Endothelial cell of umbilical vein (primary cell): ENCODE measurements at regions of chr17 and their contacts with region 1.

Region 1: DNA sequence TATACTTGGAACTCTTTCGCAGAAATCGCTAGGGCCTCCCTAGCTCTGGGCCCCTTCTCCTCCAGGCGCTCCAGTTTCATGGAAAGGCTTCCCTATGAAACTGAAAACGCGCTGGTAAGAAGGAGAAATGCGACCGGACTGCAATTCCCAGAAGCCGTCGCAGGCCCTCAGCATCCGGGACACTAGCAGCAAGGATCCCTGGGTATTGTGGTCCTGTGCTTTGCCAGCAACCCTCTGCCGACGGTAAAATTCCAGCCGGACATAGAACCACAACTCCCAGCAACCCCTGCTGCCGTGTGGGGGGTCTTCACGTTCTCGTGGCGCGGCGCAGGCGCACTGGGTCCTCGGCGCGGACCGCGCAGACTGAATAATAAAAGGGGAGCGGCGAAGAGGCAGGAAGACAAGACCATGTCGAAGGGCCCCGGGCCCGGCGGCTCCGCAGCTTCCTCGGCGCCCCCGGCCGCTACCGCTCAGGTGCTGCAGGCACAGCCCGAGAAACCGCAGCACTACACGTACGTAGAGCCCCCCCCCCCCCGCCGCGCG is at the start of gene UNK:
- DNase-seq: peak; percentile 99
- H3K4me3 ChIP-seq: peak within 1 kb of the TSS in 2 of 3 experiments; percentile 32 to 55
- H3K27ac ChIP-seq: peak within 1 kb of the TSS; percentile 88
- H3K4me1 ChIP-seq: peaks cover 29% of the 10 kb centered on the region
- H3K27me3 ChIP-seq: no peaks in the 10 kb centered on the region
- CTCF ChIP-seq: no peak
- POLR2A ChIP-seq: peak; percentile 9
- total RNA-seq, gene UNK: 23.2 and 25.9 TPM in 2 replicates

Region 2: DNA sequence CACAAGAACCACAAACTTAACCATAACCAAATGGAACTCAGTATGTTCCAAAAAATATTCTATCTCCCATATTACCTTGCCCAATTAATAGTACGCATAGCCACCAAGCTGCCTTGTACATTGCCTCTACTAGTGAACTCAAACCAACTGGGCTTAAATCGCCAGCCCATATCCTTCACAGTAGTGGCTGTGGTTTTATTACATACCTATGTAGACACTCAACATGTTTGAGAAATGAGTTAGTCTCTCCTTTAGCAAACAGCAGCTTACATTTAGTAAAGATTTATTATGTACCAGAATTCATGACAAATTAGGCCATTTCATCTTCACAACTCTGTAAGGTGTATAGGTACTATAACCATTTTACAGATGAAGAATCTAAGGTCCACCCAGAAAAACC is 420.5 kb before region 1 on chr17:
- CTCF ChIA-PET with region 1: no interaction called
- POLR2A ChIA-PET with region 1: no interaction called
- dilution Hi-C with region 1: no loop called
- intact Hi-C with region 1: no loop called
- DNase-seq: no peak
- H3K4me3 ChIP-seq: no peak overlapping the region
- H3K27ac ChIP-seq: no peak overlapping the region
- H3K4me1 ChIP-seq: peaks cover 16% of the 10 kb centered on the region
- H3K27me3 ChIP-seq: no peaks in the 10 kb centered on the region
- CTCF ChIP-seq: no peak
- POLR2A ChIP-seq: no peak

Region 3: GRCh38 chr17:75652915-75653549 is 131.5 kb before region 1 on chr17:
- CTCF ChIA-PET with region 1: no interaction called
- POLR2A ChIA-PET with region 1: no interaction called
- dilution Hi-C with region 1: no loop called
- intact Hi-C with region 1: no loop called
- DNase-seq: peak; percentile 56
- H3K4me3 ChIP-seq: no peak overlapping the region
- H3K27ac ChIP-seq: no peak overlapping the region
- H3K4me1 ChIP-seq: peaks cover 8% of the 10 kb centered on the region
- H3K27me3 ChIP-seq: no peaks in the 10 kb centered on the region
- CTCF ChIP-seq: peak; percentile 77 to 86
- POLR2A ChIP-seq: no peak

Region 4: GRCh38 chr17:75795820-75796607 is 11.5 kb after region 1 on chr17:
- CTCF ChIA-PET with region 1: interaction called, 14 read pairs
- POLR2A ChIA-PET with region 1: interaction called, 4 read pairs
- dilution Hi-C with region 1: no loop called
- intact Hi-C with region 1: no loop called
- DNase-seq: no peak
- H3K4me3 ChIP-seq: no peak overlapping the region
- H3K27ac ChIP-seq: no peak overlapping the region
- H3K4me1 ChIP-seq: peaks cover 16% of the 10 kb centered on the region
- H3K27me3 ChIP-seq: no peaks in the 10 kb centered on the region
- CTCF ChIP-seq: no peak
- POLR2A ChIP-seq: no peak

Region 5: DNA sequence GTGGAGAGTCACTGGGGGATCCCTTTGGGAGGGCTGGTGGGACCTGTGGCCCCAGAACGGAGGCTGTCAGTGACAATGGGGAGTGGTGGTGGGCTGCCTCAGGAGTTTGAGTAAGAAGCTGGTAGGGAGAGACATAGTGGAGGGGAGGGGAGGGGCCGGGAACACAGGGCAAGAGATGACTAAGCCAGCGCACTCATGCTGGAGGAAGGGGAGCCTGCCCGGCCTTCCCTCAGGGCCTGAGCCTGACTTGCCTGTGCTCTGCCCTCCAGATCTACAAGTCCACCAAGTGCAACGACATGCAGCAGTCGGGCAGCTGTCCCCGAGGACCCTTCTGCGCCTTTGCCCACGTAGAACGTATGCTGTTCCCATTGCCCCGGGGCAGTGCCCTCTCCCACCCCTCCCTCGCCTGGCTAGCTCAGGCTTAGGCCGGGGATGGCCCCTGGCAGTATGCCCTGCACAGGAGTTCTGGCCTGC is 30.4 kb after region 1 on chr17:
- CTCF ChIA-PET with region 1: interaction called, 13 read pairs
- POLR2A ChIA-PET with region 1: interaction called, 13 read pairs
- dilution Hi-C with region 1: no loop called
- intact Hi-C with region 1: no loop called
- DNase-seq: peak; percentile 59
- H3K4me3 ChIP-seq: no peak overlapping the region
- H3K27ac ChIP-seq: peak overlapping the region; percentile 22
- H3K4me1 ChIP-seq: peaks cover 6% of the 10 kb centered on the region
- H3K27me3 ChIP-seq: no peaks in the 10 kb centered on the region
- CTCF ChIP-seq: no peak
- POLR2A ChIP-seq: no peak

Region 6: DNA sequence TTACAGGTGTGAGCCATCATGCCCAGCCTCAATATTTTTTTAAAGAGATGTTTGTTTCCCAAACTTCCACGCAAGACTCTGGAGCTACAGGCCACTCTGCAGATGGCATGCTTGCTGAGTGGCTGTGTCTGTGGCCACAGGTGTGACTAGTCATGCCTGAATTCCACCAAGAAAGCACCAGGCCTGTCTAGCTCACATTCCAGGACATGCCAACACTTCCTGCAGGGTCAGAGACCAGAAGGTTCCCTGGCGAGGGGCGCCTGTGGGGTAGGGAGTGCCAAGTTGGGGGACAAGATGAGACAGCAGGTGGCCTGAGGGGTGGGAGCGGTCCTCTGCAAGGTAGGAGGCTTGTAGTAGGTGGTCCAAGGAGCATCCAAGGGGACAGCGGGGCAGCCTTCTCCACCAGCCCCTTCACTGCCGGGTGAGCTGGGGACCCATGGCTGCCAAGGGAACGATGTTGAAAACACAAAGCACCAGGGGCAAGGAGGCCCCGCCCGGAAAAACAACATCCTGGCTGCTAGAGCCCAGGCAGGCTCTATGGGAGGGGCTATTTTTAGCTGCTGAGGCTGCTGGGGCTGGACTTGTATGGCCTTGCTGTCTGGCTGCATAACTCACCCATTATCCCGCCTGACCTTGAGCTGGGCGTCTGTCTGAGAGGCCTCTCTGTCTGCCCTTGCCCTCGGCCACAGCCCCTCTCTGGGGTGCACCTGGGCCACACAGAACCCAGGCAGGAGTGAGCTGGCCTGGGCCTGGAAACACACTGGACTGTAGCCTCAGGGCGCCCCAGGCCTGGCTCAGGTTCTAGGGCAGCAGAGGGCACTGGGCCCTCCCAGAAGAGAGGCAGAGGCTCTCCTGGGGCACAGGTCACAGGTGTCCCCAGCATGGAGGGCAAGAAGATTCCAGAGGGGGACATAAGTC is 88.1 kb after region 1 on chr17:
- CTCF ChIA-PET with region 1: interaction called, 4 read pairs
- POLR2A ChIA-PET with region 1: interaction called, 7 read pairs
- dilution Hi-C with region 1: no loop called
- intact Hi-C with region 1: loop called (anchors 1 kb)
- DNase-seq: peak; percentile 95
- H3K4me3 ChIP-seq: no peak overlapping the region
- H3K27ac ChIP-seq: peak overlapping the region; percentile 95
- H3K4me1 ChIP-seq: peaks cover 43% of the 10 kb centered on the region
- H3K27me3 ChIP-seq: no peaks in the 10 kb centered on the region
- CTCF ChIP-seq: no peak
- POLR2A ChIP-seq: peak; percentile 63

Region 7: DNA sequence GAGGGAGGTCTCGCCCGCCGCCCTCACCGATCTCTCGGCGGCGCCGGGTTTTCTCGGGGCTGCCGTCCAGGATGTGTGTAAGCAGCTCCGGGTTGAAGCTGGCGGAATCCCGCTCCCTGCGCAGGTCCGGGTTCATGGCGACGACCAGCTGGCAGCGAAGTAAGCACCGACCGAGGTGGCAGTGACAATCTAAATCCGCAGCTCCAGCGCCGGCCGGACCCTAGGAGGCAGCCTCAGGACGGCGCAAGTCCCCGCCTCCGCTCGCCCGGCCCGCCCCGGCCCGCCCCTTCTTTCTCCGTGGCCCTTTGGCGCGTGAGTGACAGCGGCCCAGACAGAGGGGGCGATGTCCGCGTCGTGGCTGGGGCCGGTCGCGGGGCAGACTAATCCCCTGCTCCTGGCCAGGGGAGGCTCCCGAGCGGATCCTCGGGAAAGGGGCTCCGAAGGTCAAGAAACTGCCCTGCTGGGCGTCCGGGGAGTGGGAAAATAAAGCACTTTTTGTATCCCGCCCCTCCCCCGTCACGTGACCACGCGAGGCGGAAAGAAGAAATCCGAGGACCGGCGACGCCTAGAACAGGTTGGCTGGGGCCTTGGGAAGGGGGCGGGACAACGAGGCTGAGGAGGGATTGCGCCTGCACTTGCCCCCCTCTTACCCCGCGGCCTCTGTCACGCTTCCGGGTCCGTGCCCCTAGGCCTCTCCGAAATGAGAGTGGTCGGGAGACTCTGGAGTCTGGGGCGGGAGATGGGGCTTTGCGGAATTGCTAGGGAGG is 194.6 kb after region 1 on chr17 and contains the starts of genes ACOX1 and TEN1:
- CTCF ChIA-PET with region 1: no interaction called
- POLR2A ChIA-PET with region 1: interaction called, 4 read pairs
- dilution Hi-C with region 1: no loop called
- intact Hi-C with region 1: loop called (anchors 2 kb)
- DNase-seq: peak; percentile 95
- H3K4me3 ChIP-seq: peak within 1 kb of the TSS; percentile 65 to 77 (median 70)
- H3K27ac ChIP-seq: peak within 1 kb of the TSS; percentile 94
- H3K4me1 ChIP-seq: peaks cover 19% of the 10 kb centered on the region
- H3K27me3 ChIP-seq: no peaks in the 10 kb centered on the region
- CTCF ChIP-seq: peak in 1 of 2 donors; percentile 38
- POLR2A ChIP-seq: peak; percentile 61
- total RNA-seq, gene ACOX1: 45.1 and 47.0 TPM in 2 replicates
- total RNA-seq, gene TEN1: 14.3 and 18.8 TPM in 2 replicates